HCT116 (cell line): ENCODE measurements at regions of chr12 and their contacts with region 1.

Region 1: GRCh38 chr12:54993161-54993835 is 8.7 kb upstream of the TESPA1 start:
- DNase-seq: peak; percentile 74
- ATAC-seq: peak; percentile 97
- H3K4me3 ChIP-seq: no peak overlapping the region
- H3K27ac ChIP-seq: no peak overlapping the region
- H3K4me1 ChIP-seq: peaks cover 0 to 2% of the 10 kb centered on the region in 2 experiments; a peak in 1 of 4 replicates
- H3K27me3 ChIP-seq: peaks cover 65% of the 10 kb centered on the region
- CTCF ChIP-seq: peak; percentile 75 to 90 (median 88)
- POLR2A ChIP-seq: no peak
- RAD21 ChIP-seq: peak; percentile 85

Region 2: GRCh38 chr12:55073043-55074022 is 80.0 kb after region 1 on chr12:
- CTCF ChIA-PET with region 1: interaction called, 325 read pairs
- POLR2A ChIA-PET with region 1: interaction called, 7 read pairs
- RAD21 ChIA-PET with region 1: interaction called, 23 to 31 read pairs
- intact Hi-C with region 1: loop called (anchors 1 kb)
- DNase-seq: peak; percentile 66
- ATAC-seq: 0 out of 2 replicates have a peak, but pooled peaks have one; percentile 35
- H3K4me3 ChIP-seq: no peak overlapping the region
- H3K27ac ChIP-seq: no peak overlapping the region
- H3K4me1 ChIP-seq: no peaks in the 10 kb centered on the region
- H3K27me3 ChIP-seq: peaks cover 17% of the 10 kb centered on the region
- CTCF ChIP-seq: peak; percentile 71 to 87 (median 79)
- POLR2A ChIP-seq: no peak
- RAD21 ChIP-seq: peak; percentile 84

Region 3: GRCh38 chr12:55142669-55143565 is 149.6 kb after region 1 on chr12:
- CTCF ChIA-PET with region 1: interaction called, 13 read pairs
- POLR2A ChIA-PET with region 1: no interaction called
- RAD21 ChIA-PET with region 1: no interaction called
- intact Hi-C with region 1: loop called (anchors 1 kb)
- DNase-seq: peak; percentile 41
- ATAC-seq: peak; percentile 90
- H3K4me3 ChIP-seq: no peak overlapping the region
- H3K27ac ChIP-seq: no peak overlapping the region
- H3K4me1 ChIP-seq: no peaks in the 10 kb centered on the region
- H3K27me3 ChIP-seq: no peaks in the 10 kb centered on the region; the same call in 1 of the 2 replicates
- CTCF ChIP-seq: peak; percentile 71 to 81 (median 80); a peak in 5 of 6 replicates
- POLR2A ChIP-seq: no peak
- RAD21 ChIP-seq: peak; percentile 67

Region 4: DNA sequence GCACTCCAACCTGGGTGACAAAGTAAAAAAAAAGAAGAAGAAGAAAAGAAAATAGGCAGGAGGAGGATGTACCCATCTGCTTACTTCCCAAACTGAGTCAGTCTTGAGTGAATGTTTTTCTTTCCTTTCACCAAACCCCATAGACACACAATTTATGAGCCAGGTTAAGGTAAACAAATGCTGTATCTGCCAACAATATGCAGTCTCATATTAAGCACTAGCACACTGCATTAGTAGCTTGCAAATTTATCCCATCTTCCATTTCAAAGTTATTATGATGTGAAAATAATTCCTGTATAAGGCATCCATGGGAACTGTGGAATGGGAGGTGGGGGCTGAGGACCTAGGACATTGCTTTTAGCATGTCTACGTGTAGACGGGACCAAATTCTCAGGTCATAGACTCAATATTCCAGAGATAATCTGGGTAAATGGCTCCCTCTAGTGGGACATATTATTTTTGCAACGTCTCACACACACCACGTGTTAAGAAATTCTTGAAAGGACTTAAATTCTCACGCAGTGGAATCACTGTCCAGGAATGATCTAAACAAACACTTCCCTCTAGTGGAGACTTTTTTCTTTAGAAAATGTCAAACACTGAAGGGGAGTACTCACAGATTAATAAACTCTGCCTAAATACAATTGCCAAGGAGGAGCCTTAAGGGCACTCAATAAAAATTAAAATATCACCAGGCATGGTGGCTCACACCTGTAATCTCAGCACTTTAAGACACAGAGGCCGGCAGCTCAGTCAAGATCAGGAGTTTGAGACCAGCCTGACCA is 626.2 kb after region 1 on chr12:
- CTCF ChIA-PET with region 1: no interaction called
- POLR2A ChIA-PET with region 1: no interaction called
- RAD21 ChIA-PET with region 1: no interaction called
- intact Hi-C with region 1: loop called (anchors 2 kb)
- DNase-seq: peak; percentile 91
- ATAC-seq: peak; percentile 97
- H3K4me3 ChIP-seq: no peak overlapping the region
- H3K27ac ChIP-seq: no peak overlapping the region
- H3K4me1 ChIP-seq: peaks cover 0 to 3% of the 10 kb centered on the region in 2 experiments; a peak in 1 of 4 replicates
- H3K27me3 ChIP-seq: peaks cover 15% of the 10 kb centered on the region; the same call in 1 of the 2 replicates
- CTCF ChIP-seq: peak; percentile 64 to 98 (median 95)
- POLR2A ChIP-seq: no peak
- RAD21 ChIP-seq: peak; percentile 93